Heart right ventricle (tissue), 16 donors: ENCODE measurements at regions of chr17 and their contacts with region 1.

Region 1: GRCh38 chr17:3859940-3860339 is 13.9 kb upstream of the NCBP3 start:
- DNase-seq: no peak
- ATAC-seq: no peak
- H3K4me3 ChIP-seq: no peak overlapping the region
- H3K27ac ChIP-seq: no peak overlapping the region
- H3K4me1 ChIP-seq: peaks cover 0 to 1% (median 0%) of the 10 kb centered on the region in 9 donors
- H3K27me3 ChIP-seq: no peaks in the 10 kb centered on the region
- CTCF ChIP-seq: no peak

Region 2: GRCh38 chr17:3668279-3669085 is 191.5 kb before region 1 on chr17 and contains the starts of genes EMC6 and TAX1BP3:
- intact Hi-C with region 1: no loop called
- DNase-seq: peak; percentile 98 to 99
- ATAC-seq: peak; percentile 88 to 94 (median 93)
- H3K4me3 ChIP-seq: peak within 1 kb of the TSS; percentile 75 to 99 (median 89)
- H3K27ac ChIP-seq: peak within 1 kb of the TSS; percentile 95 to 100 (median 98)
- H3K4me1 ChIP-seq: peaks cover 14 to 59% (median 42%) of the 10 kb centered on the region in 9 donors
- H3K27me3 ChIP-seq: no peaks in the 10 kb centered on the region
- CTCF ChIP-seq: no peak
- total RNA-seq, gene EMC6: 46.0 to 75.0 (median 52.7) TPM
- total RNA-seq, gene TAX1BP3: 147 to 206 (median 176) TPM

Region 3: GRCh38 chr17:3907483-3908216 is 47.7 kb after region 1 on chr17:
- intact Hi-C with region 1: loop called in 8 of 10 experiments (anchors 5 kb)
- DNase-seq: no peak
- ATAC-seq: no peak
- H3K4me3 ChIP-seq: no peak overlapping the region
- H3K27ac ChIP-seq: no peak overlapping the region
- H3K4me1 ChIP-seq: peaks cover 0 to 15% (median 10%) of the 10 kb centered on the region in 9 donors
- H3K27me3 ChIP-seq: no peaks in the 10 kb centered on the region
- CTCF ChIP-seq: peak in 7 of 9 donors; percentile 24 to 51 (median 34)

Region 4: GRCh38 chr17:3913531-3914311 is 53.8 kb after region 1 on chr17:
- intact Hi-C with region 1: loop called in 9 of 10 experiments (anchors 5 kb)
- DNase-seq: peak; percentile 79 to 86
- ATAC-seq: peak; percentile 57 to 78 (median 68)
- H3K4me3 ChIP-seq: peak overlapping the region in 1 of 10 donors; percentile 51
- H3K27ac ChIP-seq: peak overlapping the region in 3 of 10 donors; percentile 33 to 89 (median 41)
- H3K4me1 ChIP-seq: peaks cover 9 to 58% (median 36%) of the 10 kb centered on the region in 9 donors
- H3K27me3 ChIP-seq: no peaks in the 10 kb centered on the region
- CTCF ChIP-seq: peak; percentile 91 to 99 (median 98)